Aorta (tissue), 5 donors: ENCODE measurements at regions of chr1 and their contacts with region 1.

Region 1: GRCh38 chr1:147242439-147243227 is at the start of gene CHD1L:
- DNase-seq: peak; percentile 98 to 99
- ATAC-seq: peak; percentile 99
- H3K4me3 ChIP-seq: peak within 1 kb of the TSS; percentile 67 to 92
- H3K27ac ChIP-seq: peak within 1 kb of the TSS; percentile 80 to 95
- H3K4me1 ChIP-seq: peaks cover 0 to 3% of the 10 kb centered on the region in 2 donors
- H3K27me3 ChIP-seq: no peaks in the 10 kb centered on the region
- total RNA-seq, gene CHD1L: 61.7 to 74.2 TPM

Region 2: GRCh38 chr1:147124266-147124665 is 118.4 kb before region 1 on chr1:
- intact Hi-C with region 1: no loop called
- DNase-seq: no peak
- ATAC-seq: no peak
- H3K4me3 ChIP-seq: no peak overlapping the region
- H3K27ac ChIP-seq: no peak overlapping the region
- H3K4me1 ChIP-seq: no peaks in the 10 kb centered on the region
- H3K27me3 ChIP-seq: no peaks in the 10 kb centered on the region

Region 3: GRCh38 chr1:147172168-147172992 is 70.3 kb before region 1 on chr1 and contains the start of gene PRKAB2:
- intact Hi-C with region 1: loop called (anchors 1 to 2 kb)
- DNase-seq: peak; percentile 98 to 99
- ATAC-seq: peak; percentile 99
- H3K4me3 ChIP-seq: peak within 1 kb of the TSS; percentile 91
- H3K27ac ChIP-seq: peak within 1 kb of the TSS; percentile 38 to 70
- H3K4me1 ChIP-seq: peaks cover 2% of the 10 kb centered on the region in 2 donors
- H3K27me3 ChIP-seq: no peaks in the 10 kb centered on the region
- total RNA-seq, gene PRKAB2: 18.7 to 21.1 TPM